Heart right ventricle (tissue), 16 donors: ENCODE measurements at regions of chr15 and their contacts with region 1.

Region 1: DNA sequence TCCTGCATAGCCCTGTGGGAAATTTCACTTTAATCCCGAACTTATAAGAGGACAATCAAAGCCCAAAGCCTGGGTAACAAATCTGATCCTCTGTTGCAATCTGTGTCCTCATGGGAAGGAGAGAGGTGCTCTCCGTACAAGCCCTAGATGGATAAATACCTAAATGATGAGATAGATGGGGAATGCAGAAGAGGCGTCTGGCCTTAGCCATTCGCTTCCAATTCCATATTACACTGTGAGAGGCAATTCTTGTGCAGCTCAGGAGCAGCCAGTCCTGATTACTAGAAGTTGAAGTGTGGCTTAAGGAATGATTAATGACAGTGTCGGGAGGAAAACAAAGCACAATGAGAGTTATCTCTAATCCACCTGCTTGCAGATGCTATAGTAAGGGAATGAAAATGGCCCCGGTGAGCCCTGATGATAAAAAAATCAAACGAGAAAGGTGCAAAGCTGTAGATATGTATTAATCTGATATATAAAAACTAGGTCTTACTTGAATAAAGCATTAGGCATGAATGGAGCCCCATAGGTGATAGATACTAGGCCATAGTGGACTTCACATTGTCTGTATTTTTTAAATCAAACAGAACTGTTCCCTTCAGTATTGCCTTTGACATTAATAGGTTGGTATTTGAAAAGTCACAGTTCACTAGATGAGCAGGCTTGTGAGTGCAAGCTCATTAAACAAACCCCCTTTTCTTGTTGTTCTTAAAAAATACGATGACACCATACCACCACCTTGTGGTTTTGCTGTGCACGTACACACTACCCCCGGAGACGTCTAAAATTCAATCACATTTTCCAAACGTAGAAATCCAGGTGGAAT is 54.2 kb upstream of the TMCO5A start:
- DNase-seq: peak in 1 of 2 donors; percentile 6
- ATAC-seq: peak in 4 of 8 donors; percentile 54 to 74 (median 68)
- H3K4me3 ChIP-seq: no peak overlapping the region
- H3K27ac ChIP-seq: no peak overlapping the region
- H3K4me1 ChIP-seq: peaks cover 0 to 15% (median 0%) of the 10 kb centered on the region in 9 donors
- H3K27me3 ChIP-seq: peaks cover 0 to 16% (median 0%) of the 10 kb centered on the region in 7 donors
- CTCF ChIP-seq: peak; percentile 20 to 72 (median 67)

Region 2: GRCh38 chr15:36883713-36884517 is 996.3 kb before region 1 on chr15:
- intact Hi-C with region 1: loop called in 1 of 10 experiments (anchors 10 kb)
- DNase-seq: peak; percentile 87 to 88
- ATAC-seq: peak; percentile 85 to 96 (median 91)
- H3K4me3 ChIP-seq: peak overlapping the region in 9 of 10 donors; percentile 21 to 53 (median 40)
- H3K27ac ChIP-seq: no peak overlapping the region
- H3K4me1 ChIP-seq: peaks cover 0 to 29% (median 4%) of the 10 kb centered on the region in 9 donors
- H3K27me3 ChIP-seq: peaks cover 0 to 100% (median 66%) of the 10 kb centered on the region in 7 donors
- CTCF ChIP-seq: peak; percentile 76 to 88 (median 84)

Region 3: DNA sequence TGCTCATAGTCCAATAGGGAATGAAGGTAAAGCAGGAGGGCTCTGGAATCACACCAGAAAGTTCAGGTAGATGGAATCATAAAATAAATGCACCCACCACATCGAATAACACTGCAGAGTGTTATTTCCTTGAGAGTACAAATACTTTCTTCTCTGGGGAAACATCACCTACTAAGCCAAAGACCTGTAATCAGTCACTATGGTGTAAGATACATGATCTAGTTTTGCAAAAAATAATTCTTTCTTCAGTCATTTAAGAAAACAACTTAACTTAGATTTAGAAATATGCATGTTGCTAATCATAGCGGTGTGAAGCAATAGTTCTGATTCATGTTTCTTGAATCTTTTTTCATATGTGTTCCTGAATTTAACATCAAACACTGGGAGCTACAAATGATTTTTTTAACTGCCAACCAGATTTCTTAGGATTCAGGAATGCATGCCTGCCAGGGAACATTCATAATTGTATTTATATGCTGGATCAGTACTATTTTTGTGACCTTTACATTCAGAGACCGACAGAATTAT is 739.6 kb before region 1 on chr15:
- intact Hi-C with region 1: loop called in 1 of 10 experiments (anchors 10 kb)
- DNase-seq: no peak
- ATAC-seq: no peak
- H3K4me3 ChIP-seq: no peak overlapping the region
- H3K27ac ChIP-seq: no peak overlapping the region
- H3K4me1 ChIP-seq: no peaks in the 10 kb centered on the region
- H3K27me3 ChIP-seq: peaks cover 0 to 3% (median 0%) of the 10 kb centered on the region in 7 donors
- CTCF ChIP-seq: no peak

Region 4: DNA sequence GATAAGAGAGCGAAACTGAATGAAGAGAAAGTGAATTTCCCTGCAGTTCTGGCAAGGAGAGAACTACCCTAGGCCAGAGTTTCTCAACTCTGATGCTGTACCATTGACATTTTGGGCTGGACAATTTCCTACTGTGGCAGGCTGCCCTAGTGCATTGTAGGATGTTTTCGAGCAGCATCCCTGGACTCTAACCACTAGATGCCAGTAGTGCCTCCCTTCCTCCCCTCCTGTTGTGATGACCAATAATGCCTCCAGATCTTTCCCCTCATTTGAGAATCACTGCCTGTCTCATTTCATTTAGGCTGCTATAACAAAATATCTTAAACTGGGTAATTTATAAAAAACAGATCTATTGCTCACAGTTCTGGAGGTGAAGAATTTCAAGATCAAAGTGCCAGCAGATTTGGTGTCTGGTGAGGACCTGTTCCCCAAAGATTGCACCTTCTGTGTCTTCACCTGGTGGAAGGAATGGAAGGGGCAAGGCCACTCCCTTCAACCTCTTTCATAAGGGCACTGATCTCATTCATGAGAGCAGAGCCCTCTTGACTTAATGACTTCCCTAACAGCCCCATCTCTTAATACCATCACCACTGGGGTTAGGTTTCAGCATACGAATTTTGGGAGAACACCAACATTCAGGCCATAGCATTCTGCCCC is 591.0 kb before region 1 on chr15:
- intact Hi-C with region 1: loop called in 2 of 10 experiments (anchors 10 kb)
- DNase-seq: no peak
- ATAC-seq: peak in 1 of 8 donors; percentile 67
- H3K4me3 ChIP-seq: no peak overlapping the region
- H3K27ac ChIP-seq: no peak overlapping the region
- H3K4me1 ChIP-seq: no peaks in the 10 kb centered on the region
- H3K27me3 ChIP-seq: no peaks in the 10 kb centered on the region
- CTCF ChIP-seq: peak in 4 of 9 donors; percentile 12 to 40 (median 26)

Region 5: DNA sequence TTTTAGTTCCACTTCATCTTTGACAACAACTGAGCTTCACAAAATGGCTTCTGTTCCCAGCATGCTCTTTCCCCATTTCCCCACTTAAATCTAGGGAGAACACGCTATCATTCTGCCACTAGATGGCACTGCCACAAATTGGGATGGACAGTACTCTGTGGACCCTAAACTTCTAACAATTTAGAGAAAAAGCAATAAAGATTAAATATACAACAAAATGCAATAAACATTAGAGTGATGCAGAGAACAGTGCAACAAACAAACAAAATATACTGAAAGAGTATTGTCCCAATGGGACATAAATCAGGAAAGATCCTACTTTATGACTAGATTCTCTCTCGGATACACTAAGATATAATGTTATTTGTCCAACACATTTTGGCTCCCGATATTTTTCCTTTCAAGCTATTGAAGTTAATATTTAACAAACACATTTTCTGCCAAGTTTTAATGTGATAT is 115.5 kb before region 1 on chr15:
- intact Hi-C with region 1: loop called in 1 of 10 experiments (anchors 10 kb)
- DNase-seq: no peak
- ATAC-seq: peak in 1 of 8 donors; percentile 55
- H3K4me3 ChIP-seq: no peak overlapping the region
- H3K27ac ChIP-seq: no peak overlapping the region
- H3K4me1 ChIP-seq: peaks cover 0 to 12% (median 0%) of the 10 kb centered on the region in 9 donors
- H3K27me3 ChIP-seq: no peaks in the 10 kb centered on the region
- CTCF ChIP-seq: peak in 7 of 9 donors; percentile 40 to 55 (median 53)

Region 6: DNA sequence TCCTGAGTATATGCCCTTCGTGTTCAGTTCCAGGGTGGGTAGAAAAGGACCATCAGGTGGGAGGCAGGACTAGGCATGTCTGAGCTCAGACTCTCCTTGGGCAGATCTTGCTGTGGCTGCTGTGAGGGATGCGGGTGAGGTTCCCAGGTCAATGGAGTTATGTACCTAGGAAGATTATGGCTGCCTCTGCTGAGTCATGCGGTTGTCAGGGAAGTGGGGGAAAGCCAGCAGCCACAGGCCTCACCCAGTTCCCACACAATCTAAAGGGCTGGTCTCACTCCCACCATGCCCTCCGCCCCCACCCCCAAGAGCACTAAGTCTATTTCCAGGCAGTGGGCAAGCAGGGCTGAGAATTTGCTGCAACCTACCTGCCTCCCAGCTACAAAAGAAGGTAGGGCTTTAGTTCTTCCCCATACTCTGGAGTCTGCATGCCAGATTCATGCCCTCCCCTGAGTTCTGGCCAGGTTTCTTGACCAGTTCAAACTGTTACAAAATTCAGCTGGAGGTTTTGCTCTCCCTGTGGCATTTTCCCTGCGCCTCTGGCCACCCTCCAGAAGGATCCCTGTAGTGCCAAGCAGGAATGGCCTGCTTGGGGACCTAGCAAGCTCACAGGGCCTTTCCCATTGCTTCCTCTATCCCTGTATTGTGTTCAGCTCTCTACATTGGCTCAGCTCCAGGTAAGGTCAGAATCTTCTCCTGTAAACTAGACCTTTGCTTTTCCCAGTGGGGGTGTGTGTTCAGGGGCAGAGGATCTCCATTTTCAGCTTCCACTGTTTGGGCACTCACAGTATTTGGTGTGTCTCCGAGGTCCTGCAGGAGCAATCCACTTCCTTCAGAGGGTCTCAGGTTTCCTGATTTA is 41.5 kb after region 1 on chr15:
- intact Hi-C with region 1: no loop called
- DNase-seq: no peak
- ATAC-seq: no peak
- H3K4me3 ChIP-seq: no peak overlapping the region
- H3K27ac ChIP-seq: no peak overlapping the region
- H3K4me1 ChIP-seq: no peaks in the 10 kb centered on the region
- H3K27me3 ChIP-seq: peaks cover 0 to 12% (median 0%) of the 10 kb centered on the region in 7 donors
- CTCF ChIP-seq: no peak

Region 7: GRCh38 chr15:38168467-38169070 is 288.3 kb after region 1 on chr15:
- intact Hi-C with region 1: no loop called
- DNase-seq: no peak
- ATAC-seq: no peak
- H3K4me3 ChIP-seq: no peak overlapping the region
- H3K27ac ChIP-seq: no peak overlapping the region
- H3K4me1 ChIP-seq: peaks cover 0 to 4% (median 0%) of the 10 kb centered on the region in 9 donors
- H3K27me3 ChIP-seq: peaks cover 0 to 5% (median 0%) of the 10 kb centered on the region in 7 donors
- CTCF ChIP-seq: no peak

Region 8: DNA sequence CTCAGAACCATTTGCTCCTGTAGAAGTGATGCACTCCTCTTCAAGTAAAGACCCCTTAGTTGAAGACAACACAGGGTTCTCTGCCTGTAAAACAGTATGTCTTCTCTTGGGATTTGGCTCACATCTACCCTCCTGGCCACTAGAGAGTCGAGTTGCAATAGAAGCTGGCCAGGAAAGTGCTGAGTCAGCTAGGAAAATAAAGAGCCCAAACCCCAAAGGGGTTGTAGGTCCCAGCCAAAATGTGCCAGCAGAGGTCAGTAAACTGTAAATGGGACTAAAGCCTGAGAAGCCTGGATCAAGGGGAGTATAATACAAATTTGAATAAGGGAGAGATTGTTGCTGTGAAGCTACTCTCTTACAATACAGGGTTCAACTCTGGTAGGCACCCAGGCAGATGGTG is 1663.4 kb after region 1 on chr15:
- intact Hi-C with region 1: no loop called
- DNase-seq: no peak
- ATAC-seq: no peak
- H3K4me3 ChIP-seq: no peak overlapping the region
- H3K27ac ChIP-seq: no peak overlapping the region
- H3K4me1 ChIP-seq: peaks cover 0 to 7% (median 0%) of the 10 kb centered on the region in 9 donors
- H3K27me3 ChIP-seq: no peaks in the 10 kb centered on the region
- CTCF ChIP-seq: no peak